Ascending aorta (tissue), 2 donors: ENCODE measurements at regions of chr5 and their contacts with region 1.

Region 1: DNA sequence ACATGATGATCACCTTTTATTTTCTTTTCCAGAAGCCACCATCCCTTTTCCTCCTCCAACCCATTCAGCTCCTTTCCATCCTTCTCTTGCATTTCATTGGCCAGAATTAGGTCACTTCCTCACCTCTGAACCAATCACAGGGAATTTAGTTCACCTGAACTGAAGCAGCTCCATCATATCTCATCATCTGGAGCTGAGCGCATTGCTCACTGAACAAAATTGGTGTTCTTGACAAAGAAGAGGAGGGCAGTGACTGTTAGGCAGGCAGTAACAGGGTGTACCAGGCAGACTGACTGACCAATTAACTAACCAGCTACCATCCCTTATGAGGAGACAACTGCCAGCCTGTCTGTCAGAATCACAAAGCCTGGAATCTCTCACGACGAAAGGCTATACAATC is 1.8 kb upstream of the ZNF354A start:
- DNase-seq: no peak
- H3K4me3 ChIP-seq: no peak overlapping the region
- H3K27ac ChIP-seq: no peak overlapping the region
- H3K4me1 ChIP-seq: peaks cover 2 to 3% of the 10 kb centered on the region in 2 donors
- H3K27me3 ChIP-seq: no peaks in the 10 kb centered on the region
- CTCF ChIP-seq: no peak

Region 2: GRCh38 chr5:178786859-178787760 is 54.8 kb after region 1 on chr5:
- intact Hi-C with region 1: no loop called
- DNase-seq: no peak
- H3K4me3 ChIP-seq: no peak overlapping the region
- H3K27ac ChIP-seq: no peak overlapping the region
- H3K4me1 ChIP-seq: no peaks in the 10 kb centered on the region
- H3K27me3 ChIP-seq: no peaks in the 10 kb centered on the region
- CTCF ChIP-seq: no peak

Region 3: GRCh38 chr5:179495906-179496455 is 763.7 kb after region 1 on chr5:
- intact Hi-C with region 1: loop called (anchors 5 kb)
- DNase-seq: no peak
- H3K4me3 ChIP-seq: no peak overlapping the region
- H3K27ac ChIP-seq: no peak overlapping the region
- H3K4me1 ChIP-seq: no peaks in the 10 kb centered on the region
- H3K27me3 ChIP-seq: no peaks in the 10 kb centered on the region
- CTCF ChIP-seq: no peak